CD8-positive, alpha-beta T cell (primary cell): ENCODE measurements at regions of chr20 and their contacts with region 1.

Region 1: GRCh38 chr20:62065669-62066338 is at the start of gene TAF4:
- DNase-seq: peak; percentile 69 to 92 (median 79)
- ATAC-seq: peak; percentile 77
- H3K4me3 ChIP-seq: peak within 1 kb of the TSS; percentile 54 to 70
- H3K4me3 Mint-ChIP-seq: peak within 1 kb of the TSS; percentile 90
- H3K27ac ChIP-seq: peak within 1 kb of the TSS; percentile 47 to 74
- H3K27ac Mint-ChIP-seq: peak within 1 kb of the TSS; percentile 95
- H3K4me1 ChIP-seq: peaks cover 42% of the 10 kb centered on the region
- H3K4me1 Mint-ChIP-seq: peaks cover 52% of the 10 kb centered on the region
- H3K27me3 ChIP-seq: no peaks in the 10 kb centered on the region
- H3K27me3 Mint-ChIP-seq: no peaks in the 10 kb centered on the region
- CTCF ChIP-seq: no peak
- total RNA-seq, gene TAF4: 9.8 to 14.1 TPM

Region 2: GRCh38 chr20:62143118-62143973 is 77.5 kb after region 1 on chr20 and contains the starts of genes PSMA7 and SS18L1:
- CTCF ChIA-PET with region 1: interaction called, 3 read pairs
- POLR2A ChIA-PET with region 1: interaction called, 38 read pairs
- intact Hi-C with region 1: loop called in 1 of 2 experiments (anchors 1 kb)
- DNase-seq: peak; percentile 65 to 95 (median 85)
- ATAC-seq: peak; percentile 83
- H3K4me3 ChIP-seq: peak within 1 kb of the TSS; percentile 59 to 60
- H3K4me3 Mint-ChIP-seq: peak within 1 kb of the TSS; percentile 92
- H3K27ac ChIP-seq: peak within 1 kb of the TSS; percentile 58 to 83
- H3K27ac Mint-ChIP-seq: peak within 1 kb of the TSS; percentile 93
- H3K4me1 ChIP-seq: peaks cover 37% of the 10 kb centered on the region
- H3K4me1 Mint-ChIP-seq: peaks cover 50% of the 10 kb centered on the region
- H3K27me3 ChIP-seq: no peaks in the 10 kb centered on the region
- H3K27me3 Mint-ChIP-seq: no peaks in the 10 kb centered on the region
- CTCF ChIP-seq: no peak
- total RNA-seq, gene PSMA7: 170 to 179 TPM
- total RNA-seq, gene SS18L1: 12.6 to 12.9 TPM